IMR-90 (cell line): ENCODE measurements at regions of chr15 and their contacts with region 1.

Region 1: GRCh38 chr15:71800835-71801745 is 9.3 kb upstream of the NR2E3 start:
- DNase-seq: peak; percentile 89
- ATAC-seq: peak; percentile 95
- H3K4me3 ChIP-seq: no peak overlapping the region
- H3K27ac ChIP-seq: peak overlapping the region; percentile 1; the same call in 1 of the 2 replicates
- H3K4me1 ChIP-seq: 0 out of 2 replicates have a peak, but pooled peaks cover 3% of the 10 kb centered on the region
- H3K27me3 ChIP-seq: no peaks in the 10 kb centered on the region
- CTCF ChIP-seq: peak; percentile 94
- POLR2A ChIP-seq: peak; percentile 33; the same call in 1 of the 2 replicates
- RAD21 ChIP-seq: peak; percentile 95

Region 2: GRCh38 chr15:70892002-70892914 is 908.8 kb before region 1 on chr15 and contains the starts of genes LRRC49 and THAP10:
- CTCF ChIA-PET with region 1: no interaction called
- POLR2A ChIA-PET with region 1: no interaction called
- dilution Hi-C with region 1: no loop called
- in situ Hi-C with region 1: no loop called
- intact Hi-C with region 1: loop called (anchors 10 kb)
- DNase-seq: peak; percentile 98
- ATAC-seq: peak; percentile 95
- H3K4me3 ChIP-seq: peak within 1 kb of the TSS; percentile 66
- H3K27ac ChIP-seq: peak within 1 kb of the TSS; percentile 64
- H3K4me1 ChIP-seq: peaks cover 6% of the 10 kb centered on the region; the same call in 1 of the 2 replicates
- H3K27me3 ChIP-seq: no peaks in the 10 kb centered on the region
- CTCF ChIP-seq: no peak
- POLR2A ChIP-seq: peak; percentile 52; the same call in 1 of the 2 replicates
- RAD21 ChIP-seq: no peak; the same call in 1 of the 2 replicates
- total RNA-seq, gene LRRC49: 16.8 and 19.2 TPM in 2 replicates
- total RNA-seq, gene THAP10: 2.3 and 3.6 TPM in 2 replicates

Region 3: GRCh38 chr15:71109130-71109529 is 692.0 kb before region 1 on chr15:
- CTCF ChIA-PET with region 1: no interaction called
- POLR2A ChIA-PET with region 1: no interaction called
- dilution Hi-C with region 1: no loop called
- in situ Hi-C with region 1: loop called (anchors 5 kb)
- intact Hi-C with region 1: loop called (anchors 2 kb)
- DNase-seq: peak; percentile 82
- ATAC-seq: peak; percentile 80
- H3K4me3 ChIP-seq: no peak overlapping the region
- H3K27ac ChIP-seq: 0 out of 2 replicates have a peak overlapping the region, but pooled peaks have one; percentile 7
- H3K4me1 ChIP-seq: peaks cover 12% of the 10 kb centered on the region
- H3K27me3 ChIP-seq: no peaks in the 10 kb centered on the region
- CTCF ChIP-seq: peak; percentile 57
- POLR2A ChIP-seq: no peak
- RAD21 ChIP-seq: peak; percentile 68

Region 4: GRCh38 chr15:71448688-71449114 is 352.4 kb before region 1 on chr15:
- CTCF ChIA-PET with region 1: interaction called, 3 read pairs
- POLR2A ChIA-PET with region 1: no interaction called
- dilution Hi-C with region 1: no loop called
- in situ Hi-C with region 1: loop called (anchors 5 kb)
- intact Hi-C with region 1: loop called (anchors 1 kb)
- DNase-seq: peak; percentile 71
- ATAC-seq: peak; percentile 75
- H3K4me3 ChIP-seq: no peak overlapping the region
- H3K27ac ChIP-seq: no peak overlapping the region
- H3K4me1 ChIP-seq: peaks cover 13% of the 10 kb centered on the region
- H3K27me3 ChIP-seq: no peaks in the 10 kb centered on the region
- CTCF ChIP-seq: peak; percentile 93
- POLR2A ChIP-seq: no peak
- RAD21 ChIP-seq: peak; percentile 88

Region 5: DNA sequence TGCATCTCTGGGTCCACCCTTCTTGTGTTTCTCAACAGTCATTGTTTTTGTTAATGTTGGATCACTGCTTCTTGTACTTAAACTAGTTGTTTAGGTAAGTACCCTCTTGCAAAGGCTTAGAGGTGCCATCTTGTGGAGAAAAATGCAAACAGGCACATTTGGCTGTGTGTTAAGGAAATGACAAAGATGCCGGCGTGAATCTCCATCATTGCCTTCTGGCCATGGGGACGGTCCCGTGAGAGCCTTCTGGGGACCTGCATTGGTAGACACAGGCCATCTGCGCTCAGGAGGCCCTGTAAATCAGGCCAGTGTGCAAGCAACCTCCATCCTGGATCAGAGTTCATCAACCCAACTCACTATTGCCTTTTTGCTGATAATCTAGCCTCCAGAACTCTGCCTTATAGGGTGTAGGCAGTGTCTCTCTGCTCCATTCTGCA is 149.3 kb before region 1 on chr15:
- CTCF ChIA-PET with region 1: no interaction called
- POLR2A ChIA-PET with region 1: no interaction called
- dilution Hi-C with region 1: no loop called
- in situ Hi-C with region 1: no loop called
- intact Hi-C with region 1: loop called (anchors 1 kb)
- DNase-seq: peak; percentile 86
- ATAC-seq: peak; percentile 93
- H3K4me3 ChIP-seq: no peak overlapping the region
- H3K27ac ChIP-seq: no peak overlapping the region
- H3K4me1 ChIP-seq: peaks cover 6% of the 10 kb centered on the region
- H3K27me3 ChIP-seq: no peaks in the 10 kb centered on the region
- CTCF ChIP-seq: peak; percentile 74
- POLR2A ChIP-seq: no peak
- RAD21 ChIP-seq: peak; percentile 82

Region 6: GRCh38 chr15:71752604-71753289 is 48.3 kb before region 1 on chr15:
- CTCF ChIA-PET with region 1: interaction called, 18 read pairs
- POLR2A ChIA-PET with region 1: no interaction called
- dilution Hi-C with region 1: no loop called
- in situ Hi-C with region 1: no loop called
- intact Hi-C with region 1: loop called (anchors 2 kb)
- DNase-seq: peak; percentile 94
- ATAC-seq: peak; percentile 68
- H3K4me3 ChIP-seq: no peak overlapping the region
- H3K27ac ChIP-seq: no peak overlapping the region
- H3K4me1 ChIP-seq: peaks cover 8% of the 10 kb centered on the region
- H3K27me3 ChIP-seq: no peaks in the 10 kb centered on the region
- CTCF ChIP-seq: peak; percentile 65
- POLR2A ChIP-seq: no peak
- RAD21 ChIP-seq: peak; percentile 62

Region 7: GRCh38 chr15:72289545-72290325 is 488.6 kb after region 1 on chr15:
- CTCF ChIA-PET with region 1: no interaction called
- POLR2A ChIA-PET with region 1: no interaction called
- dilution Hi-C with region 1: no loop called
- in situ Hi-C with region 1: no loop called
- intact Hi-C with region 1: no loop called
- DNase-seq: no peak
- ATAC-seq: no peak
- H3K4me3 ChIP-seq: no peak overlapping the region
- H3K27ac ChIP-seq: no peak overlapping the region
- H3K4me1 ChIP-seq: no peaks in the 10 kb centered on the region
- H3K27me3 ChIP-seq: peaks cover 40% of the 10 kb centered on the region
- CTCF ChIP-seq: no peak
- POLR2A ChIP-seq: no peak
- RAD21 ChIP-seq: no peak